ENCODE measurements at regions of chr2 and their contacts with region 1.

Region 1: DNA sequence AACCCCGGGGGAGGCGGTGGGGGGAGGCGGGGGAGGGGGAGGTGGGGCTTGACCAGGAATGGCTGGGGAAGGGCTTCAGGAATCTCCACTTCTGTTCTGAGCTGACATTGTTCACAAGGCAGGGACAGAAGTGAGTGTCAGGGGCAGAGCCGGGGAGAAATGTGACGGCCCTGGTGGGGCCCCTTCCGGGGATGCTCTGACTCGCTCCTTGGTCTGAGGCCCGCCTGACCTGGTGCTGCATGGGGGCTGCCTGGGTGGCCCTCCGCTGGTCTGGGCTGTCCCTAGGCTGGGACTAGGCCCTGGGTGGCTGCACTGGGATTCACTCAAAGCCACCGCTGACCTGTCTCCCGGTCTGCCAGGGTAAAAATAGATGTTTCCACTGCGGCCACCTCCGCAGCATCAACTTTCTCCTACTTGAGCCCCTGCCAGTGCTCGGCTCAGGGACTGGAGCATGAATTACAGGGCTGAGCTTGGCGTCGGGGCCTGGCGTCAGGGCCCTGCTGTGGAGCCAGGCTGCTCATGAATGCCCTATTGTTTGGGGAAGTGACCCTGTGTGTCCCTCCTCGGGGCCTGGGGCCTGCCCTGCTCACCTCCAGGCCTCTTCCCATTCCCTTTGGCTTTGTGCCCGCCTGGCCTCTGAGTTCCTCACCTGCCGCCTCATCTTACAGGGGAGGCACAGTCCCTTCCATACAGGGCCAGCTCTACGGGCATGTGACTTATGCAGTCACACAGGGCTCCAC is 247.5 kb downstream of the DYSF start:
- DNase-seq: peak; percentile 80 to 93 (median 83)
- ATAC-seq: peak; percentile 88 to 92 (median 92)
- H3K4me3 ChIP-seq: no peak overlapping the region
- H3K27ac ChIP-seq: peak overlapping the region; percentile 31 to 98 (median 87)
- H3K4me1 ChIP-seq: peaks cover 0 to 70% (median 40%) of the 10 kb centered on the region in 12 donors
- H3K27me3 ChIP-seq: no peaks in the 10 kb centered on the region
- CTCF ChIP-seq: no peak
- POLR2A ChIP-seq: peak in 1 of 2 donors; percentile 26

Region 2: DNA sequence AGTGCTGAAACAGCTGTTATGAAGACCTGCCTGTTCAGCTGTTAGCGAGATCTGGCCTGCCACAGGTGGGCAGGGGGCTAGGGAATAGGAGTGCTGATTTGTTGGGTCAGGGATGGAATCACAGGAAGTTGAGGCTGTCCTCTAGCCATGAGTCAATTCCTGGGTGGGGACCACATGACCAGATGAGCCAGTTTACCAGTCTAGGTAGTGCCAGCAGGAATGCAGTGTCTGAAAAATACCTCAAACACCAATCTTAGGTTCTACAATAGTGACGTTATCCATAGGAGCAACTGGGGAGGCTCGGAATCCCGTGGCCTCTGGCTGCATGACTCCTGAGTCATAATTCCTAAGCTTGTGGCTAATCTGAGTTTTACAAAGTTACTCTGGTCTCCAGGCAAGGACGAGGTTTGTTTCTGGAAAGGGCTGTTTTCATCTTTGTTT is 202.5 kb before region 1 on chr2:
- intact Hi-C with region 1: no loop called
- DNase-seq: no peak
- ATAC-seq: no peak
- H3K4me3 ChIP-seq: no peak overlapping the region
- H3K27ac ChIP-seq: peak overlapping the region in 11 of 12 donors; percentile 23 to 92 (median 63)
- H3K4me1 ChIP-seq: peaks cover 19 to 68% (median 53%) of the 10 kb centered on the region in 12 donors
- H3K27me3 ChIP-seq: no peaks in the 10 kb centered on the region
- CTCF ChIP-seq: no peak
- POLR2A ChIP-seq: no peak

Region 3: GRCh38 chr2:71631411-71631931 is 69.4 kb before region 1 on chr2:
- intact Hi-C with region 1: no loop called
- DNase-seq: no peak
- ATAC-seq: no peak
- H3K4me3 ChIP-seq: no peak overlapping the region
- H3K27ac ChIP-seq: no peak overlapping the region
- H3K4me1 ChIP-seq: peaks cover 0 to 51% (median 0%) of the 10 kb centered on the region in 12 donors
- H3K27me3 ChIP-seq: no peaks in the 10 kb centered on the region
- CTCF ChIP-seq: no peak
- POLR2A ChIP-seq: no peak

Region 4: DNA sequence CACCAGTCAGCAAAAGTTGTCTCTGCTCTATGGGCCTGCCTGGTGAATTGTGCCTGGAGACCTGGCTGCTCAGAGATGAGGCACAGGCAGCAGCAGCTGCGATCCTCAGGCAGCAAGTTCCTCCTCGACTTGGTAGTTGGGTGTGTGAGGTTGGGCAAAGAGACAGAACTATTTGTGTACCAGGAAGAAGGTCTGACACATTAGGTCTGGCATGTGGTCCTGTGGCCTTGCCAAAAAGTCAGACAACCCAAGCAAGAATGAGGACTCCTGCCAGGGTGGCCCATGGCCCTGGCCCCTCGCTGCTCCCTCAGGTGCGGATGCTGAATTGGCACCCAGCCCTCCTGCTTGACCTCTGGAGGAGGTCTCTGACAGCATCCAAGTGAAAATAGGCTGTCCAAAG is 54.8 kb before region 1 on chr2:
- intact Hi-C with region 1: loop called in 1 of 10 experiments (anchors 5 kb)
- DNase-seq: peak in 4 of 5 donors; percentile 67 to 80 (median 72)
- ATAC-seq: peak; percentile 96 to 97 (median 97)
- H3K4me3 ChIP-seq: no peak overlapping the region
- H3K27ac ChIP-seq: peak overlapping the region in 9 of 12 donors; percentile 12 to 86 (median 60)
- H3K4me1 ChIP-seq: peaks cover 0 to 11% (median 8%) of the 10 kb centered on the region in 12 donors
- H3K27me3 ChIP-seq: no peaks in the 10 kb centered on the region
- CTCF ChIP-seq: no peak
- POLR2A ChIP-seq: no peak